Activated CD4-positive, alpha-beta T cell treated with anti-CD3 and anti-CD28 coated beads, Interleukin-2, amount 10 ng/mL, durations not matched to agents 24 days and 14 days (primary cell): ENCODE measurements at regions of chr17 and their contacts with region 1.

Region 1: DNA sequence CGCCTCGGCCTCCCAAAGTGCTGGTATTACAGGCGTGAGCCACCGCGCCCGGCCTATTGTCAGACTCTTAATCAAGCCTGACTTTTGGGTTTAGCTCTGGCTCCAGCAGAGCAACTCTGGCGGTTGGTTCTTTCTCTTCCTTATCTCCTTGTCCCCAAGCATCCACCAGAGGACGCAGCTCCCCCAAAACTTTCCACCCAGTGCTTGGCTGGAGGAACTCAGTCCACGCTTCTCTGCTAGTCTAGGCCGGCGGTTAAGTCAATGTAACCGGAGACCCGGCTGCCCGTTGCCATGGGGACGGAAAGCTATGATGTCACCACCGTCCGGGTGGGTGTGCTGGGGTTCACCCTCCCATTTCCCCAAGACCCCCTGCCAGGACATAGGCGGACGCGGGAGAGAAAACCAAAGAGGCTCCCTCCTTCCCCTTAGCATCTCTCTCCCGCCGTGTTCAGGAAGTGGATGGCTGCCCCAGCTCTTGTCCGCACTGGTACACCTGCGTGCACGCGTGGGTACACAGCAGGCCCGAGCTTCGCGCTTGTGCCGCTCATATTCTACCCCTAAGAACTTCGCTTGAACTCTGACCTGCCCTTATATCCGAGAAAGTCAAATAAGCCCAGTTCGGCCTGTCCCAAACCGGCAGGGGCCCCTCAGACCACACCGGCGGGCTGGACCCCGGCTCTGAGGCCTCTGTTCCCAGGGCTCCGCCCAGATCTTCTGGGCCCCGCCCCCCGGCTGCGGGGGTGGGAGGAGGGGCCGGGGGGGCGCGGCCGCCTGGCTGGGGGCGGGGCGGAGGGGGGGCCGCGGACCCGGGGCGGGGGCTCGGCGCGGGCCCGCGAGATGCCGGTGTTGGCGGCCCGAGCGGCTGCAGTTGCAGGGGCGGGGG is at the start of gene RND2:
- DNase-seq: peak; percentile 93
- H3K4me3 Mint-ChIP-seq: peak within 1 kb of the TSS; percentile 89
- H3K27ac Mint-ChIP-seq: peak within 1 kb of the TSS; percentile 83
- H3K4me1 Mint-ChIP-seq: peaks cover 19% of the 10 kb centered on the region
- H3K27me3 Mint-ChIP-seq: peaks cover 15% of the 10 kb centered on the region
- total RNA-seq, gene RND2: 0.07 TPM in 2 replicates

Region 2: DNA sequence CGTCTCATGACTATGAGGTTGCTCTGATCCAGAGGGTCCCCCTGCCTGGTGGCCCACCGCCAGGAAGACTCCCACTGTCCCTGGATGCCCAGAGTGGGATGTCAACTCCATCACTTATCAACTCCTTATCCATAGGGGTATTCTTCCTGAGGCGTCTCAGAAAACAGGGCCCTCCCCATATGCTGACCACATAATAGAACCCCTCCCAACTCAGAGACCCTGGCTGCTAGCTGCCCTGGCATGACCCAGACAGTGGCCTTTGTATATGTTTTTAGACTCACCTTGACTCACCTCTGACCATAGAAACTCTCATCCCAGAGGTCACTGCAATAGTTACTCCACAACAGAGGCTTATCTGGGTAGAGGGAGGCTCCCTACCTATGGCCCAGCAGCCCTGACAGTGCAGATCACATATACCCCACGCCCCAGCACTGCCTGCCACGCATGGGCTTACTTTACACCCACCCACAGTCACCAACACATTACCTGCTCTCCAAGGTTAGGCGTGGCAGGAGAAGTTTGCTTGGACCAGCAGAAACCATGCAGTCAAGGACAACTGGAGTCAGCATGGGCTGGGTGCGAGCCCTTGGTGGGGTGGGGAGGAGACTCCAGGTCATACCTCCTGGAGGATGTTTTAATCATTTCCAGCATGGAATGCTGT is 126.4 kb before region 1 on chr17:
- intact Hi-C with region 1: no loop called
- DNase-seq: no peak
- H3K4me3 Mint-ChIP-seq: no peak overlapping the region
- H3K27ac Mint-ChIP-seq: no peak overlapping the region
- H3K4me1 Mint-ChIP-seq: peaks cover 2% of the 10 kb centered on the region
- H3K27me3 Mint-ChIP-seq: peaks cover 12% of the 10 kb centered on the region

Region 3: GRCh38 chr17:43006639-43007551 is 17.8 kb before region 1 on chr17 and contains the start of gene IFI35:
- intact Hi-C with region 1: loop called (anchors 1 kb)
- DNase-seq: peak; percentile 97
- H3K4me3 Mint-ChIP-seq: peak within 1 kb of the TSS; percentile 98
- H3K27ac Mint-ChIP-seq: peak within 1 kb of the TSS; percentile 99
- H3K4me1 Mint-ChIP-seq: peaks cover 22% of the 10 kb centered on the region
- H3K27me3 Mint-ChIP-seq: no peaks in the 10 kb centered on the region
- total RNA-seq, gene IFI35: 51.9 and 55.2 TPM in 2 replicates

Region 4: GRCh38 chr17:43170766-43171585 is 146.3 kb after region 1 on chr17 and contains the start of gene NBR1:
- intact Hi-C with region 1: loop called (anchors 1 kb)
- DNase-seq: peak; percentile 99
- H3K4me3 Mint-ChIP-seq: no peak within 1 kb of the TSS
- H3K27ac Mint-ChIP-seq: no peak within 1 kb of the TSS
- H3K4me1 Mint-ChIP-seq: peaks cover 30% of the 10 kb centered on the region
- H3K27me3 Mint-ChIP-seq: no peaks in the 10 kb centered on the region
- total RNA-seq, gene NBR1: 51.2 and 53.5 TPM in 2 replicates

Region 5: GRCh38 chr17:43211480-43212402 is 187.1 kb after region 1 on chr17 and contains the start of gene TMEM106A:
- intact Hi-C with region 1: loop called (anchors 5 kb)
- DNase-seq: peak; percentile 91
- H3K4me3 Mint-ChIP-seq: peak within 1 kb of the TSS; percentile 99
- H3K27ac Mint-ChIP-seq: peak within 1 kb of the TSS; percentile 90
- H3K4me1 Mint-ChIP-seq: peaks cover 32% of the 10 kb centered on the region
- H3K27me3 Mint-ChIP-seq: no peaks in the 10 kb centered on the region
- total RNA-seq, gene TMEM106A: 17.9 and 19.1 TPM in 2 replicates

Region 6: DNA sequence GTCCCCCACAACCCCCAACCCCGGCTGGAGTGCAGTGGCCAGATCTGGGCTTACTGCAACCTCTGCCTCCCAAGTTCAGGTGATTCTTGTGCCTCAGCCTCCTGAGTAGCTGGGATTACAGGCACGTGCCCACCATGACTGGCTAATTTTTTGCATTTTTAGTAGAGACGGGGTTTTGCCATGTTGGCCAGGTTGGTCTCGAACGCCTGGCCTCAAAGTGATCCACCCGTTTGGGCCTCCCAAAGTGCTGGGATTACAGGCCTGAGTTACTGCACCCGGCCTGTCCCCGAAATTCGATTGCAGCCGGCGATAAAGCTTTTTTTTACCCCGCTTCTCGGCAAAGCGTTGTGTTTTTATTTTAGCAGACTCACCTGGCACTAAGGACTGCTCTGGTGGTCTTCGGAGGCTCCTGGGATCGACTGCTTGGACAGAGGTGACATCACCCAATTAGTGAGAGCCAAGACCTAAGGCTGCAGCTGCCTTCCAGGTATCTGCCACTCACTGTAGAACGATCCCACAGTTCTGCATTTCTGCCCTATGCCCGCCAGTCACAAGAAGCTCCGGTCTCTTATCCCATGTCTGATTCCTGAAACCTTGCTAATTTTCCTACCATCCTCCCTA is 292.0 kb after region 1 on chr17:
- intact Hi-C with region 1: loop called (anchors 10 kb)
- DNase-seq: peak; percentile 79
- H3K4me3 Mint-ChIP-seq: peak overlapping the region; percentile 15
- H3K27ac Mint-ChIP-seq: no peak overlapping the region
- H3K4me1 Mint-ChIP-seq: peaks cover 20% of the 10 kb centered on the region
- H3K27me3 Mint-ChIP-seq: peaks cover 2% of the 10 kb centered on the region